ENCODE measurements at regions of chr20 and their contacts with region 1.

Region 1: GRCh38 chr20:22339091-22339881 is 245.1 kb downstream of the FOXA2 start:
- DNase-seq: peak; percentile 84
- H3K4me3 Mint-ChIP-seq: no peak overlapping the region
- H3K27ac Mint-ChIP-seq: no peak overlapping the region
- H3K4me1 Mint-ChIP-seq: peaks cover 36% of the 10 kb centered on the region
- H3K27me3 Mint-ChIP-seq: no peaks in the 10 kb centered on the region
- CTCF ChIP-seq: peak; percentile 76

Region 2: GRCh38 chr20:22320245-22320917 is 18.9 kb before region 1 on chr20:
- CTCF ChIA-PET with region 1: interaction called, 17 read pairs
- POLR2A ChIA-PET with region 1: no interaction called
- intact Hi-C with region 1: no loop called
- DNase-seq: peak; percentile 18
- H3K4me3 Mint-ChIP-seq: no peak overlapping the region
- H3K27ac Mint-ChIP-seq: peak overlapping the region; percentile 11
- H3K4me1 Mint-ChIP-seq: peaks cover 15% of the 10 kb centered on the region
- H3K27me3 Mint-ChIP-seq: no peaks in the 10 kb centered on the region
- CTCF ChIP-seq: no peak

Region 3: GRCh38 chr20:22379472-22379871 is 40.2 kb after region 1 on chr20:
- CTCF ChIA-PET with region 1: interaction called, 62 read pairs
- POLR2A ChIA-PET with region 1: interaction called, 14 read pairs
- intact Hi-C with region 1: loop called (anchors 2 kb)
- DNase-seq: peak; percentile 99
- H3K4me3 Mint-ChIP-seq: no peak overlapping the region
- H3K27ac Mint-ChIP-seq: peak overlapping the region; percentile 75
- H3K4me1 Mint-ChIP-seq: peaks cover 77% of the 10 kb centered on the region
- H3K27me3 Mint-ChIP-seq: no peaks in the 10 kb centered on the region
- CTCF ChIP-seq: no peak

Region 4: GRCh38 chr20:22453239-22454080 is 114.2 kb after region 1 on chr20:
- CTCF ChIA-PET with region 1: interaction called, 18 read pairs
- POLR2A ChIA-PET with region 1: interaction called, 3 read pairs
- intact Hi-C with region 1: loop called (anchors 1 kb)
- DNase-seq: peak; percentile 67
- H3K4me3 Mint-ChIP-seq: no peak overlapping the region
- H3K27ac Mint-ChIP-seq: peak overlapping the region; percentile 31
- H3K4me1 Mint-ChIP-seq: no peaks in the 10 kb centered on the region
- H3K27me3 Mint-ChIP-seq: no peaks in the 10 kb centered on the region
- CTCF ChIP-seq: peak; percentile 74

Region 5: GRCh38 chr20:22663528-22664025 is 324.3 kb after region 1 on chr20:
- CTCF ChIA-PET with region 1: interaction called, 15 read pairs
- POLR2A ChIA-PET with region 1: no interaction called
- intact Hi-C with region 1: no loop called
- DNase-seq: no peak
- H3K4me3 Mint-ChIP-seq: no peak overlapping the region
- H3K27ac Mint-ChIP-seq: no peak overlapping the region
- H3K4me1 Mint-ChIP-seq: no peaks in the 10 kb centered on the region
- H3K27me3 Mint-ChIP-seq: peaks cover 14% of the 10 kb centered on the region
- CTCF ChIP-seq: no peak

Region 6: GRCh38 chr20:23340524-23340923 is 1001.2 kb after region 1 on chr20:
- CTCF ChIA-PET with region 1: interaction called, 16 read pairs
- POLR2A ChIA-PET with region 1: no interaction called
- intact Hi-C with region 1: loop called (anchors 5 kb)
- DNase-seq: peak; percentile 61
- H3K4me3 Mint-ChIP-seq: no peak overlapping the region
- H3K27ac Mint-ChIP-seq: no peak overlapping the region
- H3K4me1 Mint-ChIP-seq: no peaks in the 10 kb centered on the region
- H3K27me3 Mint-ChIP-seq: no peaks in the 10 kb centered on the region
- CTCF ChIP-seq: peak; percentile 62

Measured in MCF 10A (cell line).